ENCODE measurements at regions of chr11 and their contacts with region 1.

Region 1: DNA sequence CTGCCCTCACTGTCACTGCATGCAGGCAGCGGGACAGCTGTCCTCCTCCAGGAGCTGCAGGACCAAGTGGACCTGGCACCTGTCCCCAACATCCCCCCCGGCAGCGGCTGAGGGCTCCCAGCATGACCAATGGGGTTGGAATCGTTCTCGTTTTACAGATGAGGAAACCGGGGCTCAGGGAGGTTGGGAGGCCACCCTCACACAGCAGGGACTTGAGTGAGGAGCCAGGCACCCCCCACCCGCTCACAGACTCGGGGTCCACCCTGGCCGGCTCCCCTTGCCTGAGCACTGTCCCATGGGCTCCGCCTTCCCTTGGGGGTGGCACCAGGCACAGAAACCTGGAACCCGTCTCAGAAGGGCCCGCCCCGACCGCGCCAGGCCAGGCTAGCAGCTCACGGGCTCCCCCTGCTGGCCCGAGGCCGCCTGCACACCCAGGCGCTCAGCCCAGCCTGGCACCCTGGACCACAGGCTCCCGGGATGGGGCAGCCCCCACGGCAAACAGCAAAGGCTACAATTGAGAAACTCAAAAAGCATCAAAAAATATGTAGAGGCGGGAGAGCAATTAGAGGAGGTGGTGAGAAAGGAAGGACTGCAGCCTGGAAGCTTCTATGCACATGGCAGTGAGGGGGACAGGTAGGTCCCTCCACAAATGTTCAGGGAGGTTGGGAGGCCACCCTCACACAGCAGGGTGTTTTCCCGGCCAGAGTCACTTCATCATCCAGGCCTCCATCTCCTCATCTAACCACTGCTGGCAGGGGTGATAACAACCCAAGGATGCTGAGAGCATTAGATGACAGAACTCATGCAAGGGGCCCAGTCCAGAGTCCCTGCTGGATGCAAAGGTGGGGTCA is 12.8 kb downstream of the MACROD1 start:
- DNase-seq: peak; percentile 37 to 72
- ATAC-seq: peak; percentile 24 to 62 (median 48)
- H3K4me3 ChIP-seq: peak overlapping the region in 1 of 10 donors; percentile 17
- H3K27ac ChIP-seq: no peak overlapping the region
- H3K4me1 ChIP-seq: peaks cover 8 to 70% (median 37%) of the 10 kb centered on the region in 9 donors
- H3K27me3 ChIP-seq: no peaks in the 10 kb centered on the region
- CTCF ChIP-seq: peak; percentile 99 to 100 (median 100)

Region 2: GRCh38 chr11:63768237-63769043 is 384.6 kb before region 1 on chr11 and contains the start of gene ZFTA:
- intact Hi-C with region 1: loop called in 2 of 10 experiments (anchors 2 to 10 kb)
- DNase-seq: peak; percentile 74 to 75
- ATAC-seq: peak; percentile 7 to 51 (median 26)
- H3K4me3 ChIP-seq: peak within 1 kb of the TSS; percentile 70 to 89 (median 84)
- H3K27ac ChIP-seq: peak within 1 kb of the TSS; percentile 60 to 94 (median 86)
- H3K4me1 ChIP-seq: peaks cover 7 to 40% (median 25%) of the 10 kb centered on the region in 9 donors
- H3K27me3 ChIP-seq: peaks cover 0 to 23% (median 0%) of the 10 kb centered on the region in 7 donors
- CTCF ChIP-seq: peak; percentile 26 to 96 (median 65)
- total RNA-seq, gene ZFTA: 6.8 to 14.3 (median 8.9) TPM

Region 3: DNA sequence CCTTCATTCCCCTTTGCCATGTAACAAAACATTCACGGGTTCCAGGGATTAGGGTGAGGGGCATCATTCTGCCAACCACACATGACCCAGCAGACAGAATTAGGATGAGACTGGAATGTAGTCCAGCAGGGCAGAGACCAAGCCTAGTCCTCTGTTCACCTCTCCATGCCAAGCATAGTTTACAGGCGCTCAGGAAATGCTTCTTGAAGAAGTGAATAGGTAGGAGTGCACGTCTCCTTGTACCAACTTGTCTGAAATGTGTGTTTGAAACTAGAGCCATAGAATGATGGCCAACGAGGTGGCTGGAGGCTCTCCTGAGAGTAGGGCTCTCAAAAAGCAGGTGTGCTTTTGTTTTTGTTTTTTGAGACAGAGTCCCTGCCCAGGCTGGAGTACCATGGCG is 331.7 kb before region 1 on chr11:
- intact Hi-C with region 1: loop called in 1 of 10 experiments (anchors 5 kb)
- DNase-seq: no peak
- ATAC-seq: no peak
- H3K4me3 ChIP-seq: no peak overlapping the region
- H3K27ac ChIP-seq: no peak overlapping the region
- H3K4me1 ChIP-seq: peaks cover 0 to 4% (median 0%) of the 10 kb centered on the region in 9 donors
- H3K27me3 ChIP-seq: no peaks in the 10 kb centered on the region
- CTCF ChIP-seq: no peak

Region 4: GRCh38 chr11:64000026-64000739 is 152.9 kb before region 1 on chr11:
- intact Hi-C with region 1: loop called in 9 of 10 experiments (anchors 1 to 2 kb)
- DNase-seq: peak; percentile 63 to 77
- ATAC-seq: peak; percentile 72 to 93 (median 88)
- H3K4me3 ChIP-seq: peak overlapping the region in 9 of 10 donors; percentile 30 to 53 (median 49)
- H3K27ac ChIP-seq: peak overlapping the region in 2 of 10 donors; percentile 14 to 27
- H3K4me1 ChIP-seq: peaks cover 23 to 55% (median 38%) of the 10 kb centered on the region in 9 donors
- H3K27me3 ChIP-seq: peaks cover 0 to 54% (median 0%) of the 10 kb centered on the region in 7 donors
- CTCF ChIP-seq: peak; percentile 70 to 91 (median 83)